ENCODE measurements at regions of chr3 and their contacts with region 1.

Region 1: DNA sequence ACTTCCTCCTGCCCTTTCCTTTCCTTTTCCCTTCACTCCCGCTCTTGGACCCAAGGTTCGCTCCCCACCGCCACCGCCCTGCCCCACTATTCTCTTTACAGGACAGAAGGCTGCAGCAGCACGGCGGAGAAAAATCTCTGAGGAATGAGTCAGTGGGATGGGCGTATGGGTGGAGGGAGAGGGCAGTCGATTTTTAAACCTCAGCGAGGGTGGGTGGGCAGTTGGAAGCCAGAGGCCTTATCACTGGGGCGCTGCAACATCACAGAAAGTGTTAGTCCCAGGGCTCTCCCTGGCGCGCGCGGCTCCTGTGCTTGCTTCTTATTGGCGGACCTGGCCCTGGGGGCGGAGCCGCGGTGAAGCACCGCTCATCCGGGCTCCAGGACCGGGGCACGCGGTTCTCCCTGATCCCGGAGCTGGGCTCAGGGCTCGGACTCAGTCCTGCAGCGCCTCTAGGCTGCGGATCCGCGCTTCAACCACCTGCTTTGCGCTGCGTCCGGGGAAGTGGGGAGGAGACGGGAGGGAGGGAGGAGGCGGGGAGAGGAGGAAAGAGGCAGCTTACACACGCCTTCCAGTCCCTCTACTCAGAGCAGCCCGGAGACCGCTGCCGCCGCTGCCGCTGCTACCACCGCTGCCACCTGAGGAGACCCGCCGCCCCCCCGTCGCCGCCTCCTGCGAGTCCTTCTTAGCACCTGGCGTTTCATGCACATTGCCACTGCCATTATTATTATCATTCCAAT is at the start of gene ALCAM:
- DNase-seq: peak; percentile 99
- ATAC-seq: peak; percentile 84
- H3K4me3 ChIP-seq: peak within 1 kb of the TSS; percentile 78
- H3K27ac ChIP-seq: peak within 1 kb of the TSS; percentile 88
- H3K4me1 ChIP-seq: no peaks in the 10 kb centered on the region; the same call in 1 of the 2 replicates
- H3K27me3 ChIP-seq: no peaks in the 10 kb centered on the region
- CTCF ChIP-seq: peak; percentile 97
- POLR2A ChIP-seq: peak; percentile 78
- RAD21 ChIP-seq: peak; percentile 93
- total RNA-seq, gene ALCAM: 400 and 423 TPM in 2 replicates

Region 2: GRCh38 chr3:104564045-104564643 is 802.4 kb before region 1 on chr3:
- CTCF ChIA-PET with region 1: no interaction called
- POLR2A ChIA-PET with region 1: no interaction called
- dilution Hi-C with region 1: no loop called
- in situ Hi-C with region 1: no loop called
- intact Hi-C with region 1: loop called (anchors 1 kb)
- DNase-seq: peak; percentile 52
- ATAC-seq: 0 out of 2 replicates have a peak, but pooled peaks have one; percentile 42
- H3K4me3 ChIP-seq: no peak overlapping the region
- H3K27ac ChIP-seq: no peak overlapping the region
- H3K4me1 ChIP-seq: no peaks in the 10 kb centered on the region
- H3K27me3 ChIP-seq: no peaks in the 10 kb centered on the region
- CTCF ChIP-seq: peak; percentile 56
- POLR2A ChIP-seq: no peak
- RAD21 ChIP-seq: peak; percentile 56

Region 3: GRCh38 chr3:104628185-104628789 is 738.2 kb before region 1 on chr3:
- CTCF ChIA-PET with region 1: no interaction called
- POLR2A ChIA-PET with region 1: interaction called, 8 read pairs
- dilution Hi-C with region 1: no loop called
- in situ Hi-C with region 1: no loop called
- intact Hi-C with region 1: loop called (anchors 1 kb)
- DNase-seq: peak; percentile 73
- ATAC-seq: peak; percentile 76
- H3K4me3 ChIP-seq: no peak overlapping the region
- H3K27ac ChIP-seq: no peak overlapping the region
- H3K4me1 ChIP-seq: peaks cover 9% of the 10 kb centered on the region; the same call in 1 of the 2 replicates
- H3K27me3 ChIP-seq: no peaks in the 10 kb centered on the region
- CTCF ChIP-seq: peak; percentile 72
- POLR2A ChIP-seq: no peak
- RAD21 ChIP-seq: peak; percentile 59

Region 4: DNA sequence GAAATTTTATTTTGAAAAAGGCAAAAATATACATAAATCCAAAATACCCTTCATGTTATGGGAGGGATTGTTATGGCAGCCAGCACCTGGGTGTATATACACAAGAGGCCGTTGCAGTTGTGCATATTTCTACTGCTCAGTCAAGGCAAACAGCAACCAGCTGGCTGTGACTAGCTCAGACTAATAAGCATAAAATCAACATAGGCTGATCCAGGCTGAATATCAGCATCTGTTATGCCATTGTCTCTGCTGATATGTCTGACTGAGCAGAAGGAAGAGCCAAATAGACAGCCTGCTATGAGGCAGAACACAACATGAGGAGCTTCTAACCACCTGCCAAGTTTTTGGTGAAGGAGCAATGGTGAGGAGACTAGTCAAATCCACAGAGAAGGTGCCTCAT is 457.3 kb before region 1 on chr3:
- CTCF ChIA-PET with region 1: no interaction called
- POLR2A ChIA-PET with region 1: interaction called, 4 read pairs
- dilution Hi-C with region 1: no loop called
- in situ Hi-C with region 1: loop called (anchors 25 kb)
- intact Hi-C with region 1: loop called (anchors 1 kb)
- DNase-seq: peak; percentile 92
- ATAC-seq: peak; percentile 89
- H3K4me3 ChIP-seq: no peak overlapping the region
- H3K27ac ChIP-seq: peak overlapping the region; percentile 74
- H3K4me1 ChIP-seq: peaks cover 5% of the 10 kb centered on the region
- H3K27me3 ChIP-seq: no peaks in the 10 kb centered on the region
- CTCF ChIP-seq: no peak
- POLR2A ChIP-seq: no peak
- RAD21 ChIP-seq: no peak

Region 5: DNA sequence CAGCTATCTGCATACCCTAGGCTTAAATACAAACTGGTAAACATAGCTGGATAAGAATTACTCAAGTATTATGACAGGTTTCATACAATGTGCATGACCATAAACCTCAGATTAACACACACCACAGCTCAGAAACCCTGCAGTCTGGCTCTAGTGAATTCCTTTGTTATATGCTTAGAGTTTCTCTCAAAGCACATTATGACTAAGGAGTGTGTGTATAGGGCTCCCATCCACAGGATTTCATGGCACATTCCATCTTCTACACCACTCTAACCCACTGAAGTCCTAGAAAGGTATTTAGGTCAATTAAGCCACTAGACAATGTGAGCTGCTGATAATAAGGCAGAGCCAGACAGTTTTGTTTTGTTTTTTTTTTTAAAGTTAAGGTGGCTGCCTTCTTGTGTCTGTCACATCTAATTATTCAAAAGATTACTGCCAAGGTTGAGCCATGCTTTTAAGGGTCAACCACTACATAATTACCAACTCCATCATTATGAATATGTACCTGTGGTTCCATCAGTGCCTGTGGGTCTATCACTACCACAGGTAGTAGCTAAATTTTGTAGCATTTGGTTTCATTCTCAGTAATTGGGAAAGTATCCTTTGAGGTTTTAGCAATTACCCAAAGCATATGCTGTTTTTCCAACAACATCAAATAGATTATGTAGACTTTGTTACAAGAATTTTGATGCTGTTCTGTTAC is 107.2 kb after region 1 on chr3:
- CTCF ChIA-PET with region 1: no interaction called
- POLR2A ChIA-PET with region 1: no interaction called
- dilution Hi-C with region 1: no loop called
- in situ Hi-C with region 1: no loop called
- intact Hi-C with region 1: loop called (anchors 1 kb)
- DNase-seq: peak; percentile 86
- ATAC-seq: peak; percentile 98
- H3K4me3 ChIP-seq: no peak overlapping the region
- H3K27ac ChIP-seq: no peak overlapping the region
- H3K4me1 ChIP-seq: peaks cover 2% of the 10 kb centered on the region
- H3K27me3 ChIP-seq: no peaks in the 10 kb centered on the region
- CTCF ChIP-seq: no peak
- POLR2A ChIP-seq: no peak
- RAD21 ChIP-seq: no peak

Region 6: DNA sequence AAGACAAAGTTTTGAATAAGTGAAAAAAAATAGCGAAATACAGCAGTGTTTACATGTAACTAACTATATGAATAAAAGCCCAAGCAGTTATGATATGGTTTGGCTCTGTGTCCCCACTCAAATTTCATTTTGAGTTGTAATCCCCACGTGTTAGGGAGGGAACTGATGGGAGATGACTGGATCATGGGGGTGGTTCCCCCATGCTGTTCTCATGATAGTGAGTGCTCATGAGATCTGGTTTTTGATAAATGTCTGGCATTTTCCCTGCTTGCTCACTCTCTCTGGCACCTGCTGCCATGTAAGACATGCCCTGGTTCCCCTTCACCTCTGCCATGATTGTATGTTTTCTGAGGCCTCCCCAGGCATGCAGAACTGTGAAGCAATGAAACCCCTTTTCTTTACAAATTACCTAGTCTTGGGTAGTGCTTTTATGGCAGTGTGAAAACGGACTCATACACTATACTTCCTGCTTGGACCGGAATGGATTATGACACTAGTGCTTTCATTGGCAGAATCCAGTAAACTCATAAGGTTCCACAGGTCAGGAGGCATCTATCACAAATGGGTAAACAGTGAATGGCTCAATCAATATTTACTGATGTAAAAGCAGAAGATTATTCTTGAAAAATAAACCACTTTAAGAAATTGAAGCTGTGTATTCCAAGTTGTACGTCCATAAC is 310.3 kb after region 1 on chr3:
- CTCF ChIA-PET with region 1: no interaction called
- POLR2A ChIA-PET with region 1: no interaction called
- dilution Hi-C with region 1: no loop called
- in situ Hi-C with region 1: no loop called
- intact Hi-C with region 1: loop called (anchors 10 kb)
- DNase-seq: no peak
- ATAC-seq: no peak
- H3K4me3 ChIP-seq: no peak overlapping the region
- H3K27ac ChIP-seq: no peak overlapping the region
- H3K4me1 ChIP-seq: no peaks in the 10 kb centered on the region
- H3K27me3 ChIP-seq: no peaks in the 10 kb centered on the region
- CTCF ChIP-seq: no peak
- POLR2A ChIP-seq: no peak
- RAD21 ChIP-seq: no peak

Region 7: DNA sequence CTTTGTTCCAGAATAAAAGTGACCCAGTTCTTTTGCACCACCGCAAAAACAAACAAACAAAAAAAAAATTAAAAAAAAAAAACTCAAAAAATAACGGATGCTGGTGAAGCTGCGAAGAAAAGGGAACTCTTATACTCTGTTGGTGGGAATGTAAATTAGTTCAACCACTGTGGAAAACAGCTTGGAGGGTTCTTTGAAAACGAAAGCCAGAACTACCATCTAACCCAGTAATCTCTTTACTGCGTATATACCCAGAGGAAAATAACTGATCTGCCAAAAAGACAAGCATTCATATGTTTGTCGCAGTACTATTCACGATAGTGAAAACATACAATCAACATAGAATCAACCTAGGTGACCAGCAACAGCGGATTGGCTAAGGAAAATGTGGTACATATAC is 801.2 kb after region 1 on chr3:
- CTCF ChIA-PET with region 1: no interaction called
- POLR2A ChIA-PET with region 1: no interaction called
- dilution Hi-C with region 1: no loop called
- in situ Hi-C with region 1: no loop called
- intact Hi-C with region 1: no loop called
- DNase-seq: no peak
- ATAC-seq: no peak
- H3K4me3 ChIP-seq: no peak overlapping the region
- H3K27ac ChIP-seq: no peak overlapping the region
- H3K4me1 ChIP-seq: no peaks in the 10 kb centered on the region
- H3K27me3 ChIP-seq: no peaks in the 10 kb centered on the region
- CTCF ChIP-seq: no peak
- POLR2A ChIP-seq: no peak
- RAD21 ChIP-seq: no peak

Measured in IMR-90 (cell line).